ENCODE measurements at regions of chr6 and their contacts with region 1.

Region 1: GRCh38 chr6:162727309-162728182 is at the starts of genes PACRG and PRKN:
- DNase-seq: peak; percentile 99
- ATAC-seq: peak; percentile 99 to 100 (median 99)
- H3K4me3 ChIP-seq: peak within 1 kb of the TSS; percentile 60 to 98 (median 90)
- H3K27ac ChIP-seq: peak within 1 kb of the TSS; percentile 83 to 97 (median 95)
- H3K4me1 ChIP-seq: peaks cover 0 to 24% (median 16%) of the 10 kb centered on the region in 9 donors
- H3K27me3 ChIP-seq: no peaks in the 10 kb centered on the region
- CTCF ChIP-seq: peak in 1 of 9 donors; percentile 15
- total RNA-seq, gene PACRG: 7.1 to 34.6 (median 10.3) TPM
- total RNA-seq, gene PRKN: 21.4 to 27.7 (median 26.4) TPM

Region 2: DNA sequence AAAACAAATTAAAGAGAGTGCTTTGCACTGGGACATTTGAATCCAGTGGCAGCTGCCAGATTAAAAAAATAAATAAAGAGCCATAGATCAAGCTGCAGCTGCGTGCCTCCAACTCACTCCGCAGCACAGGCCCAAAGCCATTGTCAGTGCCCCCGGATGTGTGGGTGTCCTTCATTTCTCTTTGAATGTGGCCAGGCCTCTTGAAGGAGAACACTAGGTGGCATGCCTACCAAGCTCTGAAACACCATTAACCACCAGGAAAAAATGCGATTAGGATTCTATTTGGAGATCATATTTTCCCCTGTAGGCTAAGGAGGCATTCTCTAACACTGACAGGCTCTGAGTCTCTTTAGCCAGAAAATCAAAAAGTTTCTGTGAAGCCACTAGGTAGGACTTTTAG is 549.8 kb before region 1 on chr6:
- intact Hi-C with region 1: loop called in 6 of 10 experiments (anchors 5 to 10 kb)
- DNase-seq: peak in 1 of 2 donors; percentile 47
- ATAC-seq: peak; percentile 78 to 93 (median 84)
- H3K4me3 ChIP-seq: no peak overlapping the region
- H3K27ac ChIP-seq: peak overlapping the region in 9 of 10 donors; percentile 24 to 84 (median 64)
- H3K4me1 ChIP-seq: peaks cover 0 to 29% (median 15%) of the 10 kb centered on the region in 9 donors
- H3K27me3 ChIP-seq: no peaks in the 10 kb centered on the region
- CTCF ChIP-seq: peak; percentile 10 to 71 (median 37)

Region 3: DNA sequence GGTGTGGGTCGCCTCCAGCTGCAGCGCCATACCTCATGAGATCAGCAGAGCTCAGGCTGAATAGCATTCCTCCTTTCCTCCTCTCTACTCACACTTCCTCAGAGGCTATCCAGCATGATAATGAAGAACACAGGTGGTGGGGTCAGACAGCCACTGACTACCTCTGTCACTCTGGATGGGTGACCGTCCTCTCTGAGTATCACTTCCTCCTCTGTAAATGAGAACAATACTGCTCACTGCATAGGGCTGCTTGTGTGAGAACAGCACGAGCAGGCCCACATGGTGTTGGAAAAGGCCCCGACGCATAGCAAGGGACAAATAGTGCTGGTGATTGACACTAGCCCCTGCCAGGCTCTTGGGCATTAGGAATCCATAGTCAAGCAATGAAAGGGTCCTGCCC is 239.1 kb before region 1 on chr6:
- intact Hi-C with region 1: no loop called
- DNase-seq: no peak
- ATAC-seq: no peak
- H3K4me3 ChIP-seq: no peak overlapping the region
- H3K27ac ChIP-seq: no peak overlapping the region
- H3K4me1 ChIP-seq: peaks cover 0 to 20% (median 0%) of the 10 kb centered on the region in 9 donors
- H3K27me3 ChIP-seq: no peaks in the 10 kb centered on the region
- CTCF ChIP-seq: no peak

Region 4: GRCh38 chr6:162538643-162539064 is 188.9 kb before region 1 on chr6:
- intact Hi-C with region 1: loop called in 2 of 10 experiments (anchors 10 kb)
- DNase-seq: peak; percentile 78 to 81
- ATAC-seq: peak; percentile 76 to 95 (median 83)
- H3K4me3 ChIP-seq: peak overlapping the region in 1 of 10 donors; percentile 2
- H3K27ac ChIP-seq: peak overlapping the region in 8 of 10 donors; percentile 5 to 72 (median 52)
- H3K4me1 ChIP-seq: peaks cover 0 to 22% (median 12%) of the 10 kb centered on the region in 9 donors
- H3K27me3 ChIP-seq: no peaks in the 10 kb centered on the region
- CTCF ChIP-seq: no peak

Region 5: GRCh38 chr6:162615016-162615705 is 112.4 kb before region 1 on chr6:
- intact Hi-C with region 1: loop called in 3 of 10 experiments (anchors 10 kb)
- DNase-seq: no peak
- ATAC-seq: peak in 5 of 8 donors; percentile 43 to 91 (median 55)
- H3K4me3 ChIP-seq: no peak overlapping the region
- H3K27ac ChIP-seq: no peak overlapping the region
- H3K4me1 ChIP-seq: peaks cover 0 to 10% (median 5%) of the 10 kb centered on the region in 9 donors
- H3K27me3 ChIP-seq: no peaks in the 10 kb centered on the region
- CTCF ChIP-seq: no peak

Region 6: DNA sequence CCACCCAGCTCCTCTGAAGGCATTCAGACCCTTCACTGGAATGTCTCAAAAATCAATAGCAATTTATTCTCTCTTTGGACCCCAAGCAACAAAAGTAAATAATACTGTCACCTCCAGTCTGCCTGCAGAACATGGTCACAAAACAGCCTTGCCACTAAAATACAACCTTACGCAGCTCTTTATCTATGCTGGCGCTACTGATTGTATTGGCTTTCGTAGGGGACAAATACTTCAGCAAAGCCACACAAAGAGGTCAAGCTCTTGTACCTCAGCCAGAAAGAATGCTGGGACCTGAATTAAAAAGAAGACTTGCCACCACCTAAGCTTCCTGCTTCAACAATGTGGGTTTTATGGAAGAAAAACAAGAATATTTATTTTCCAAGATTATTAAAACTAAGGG is 57.2 kb before region 1 on chr6:
- intact Hi-C with region 1: loop called in 2 of 10 experiments (anchors 5 kb)
- DNase-seq: peak in 1 of 2 donors; percentile 36
- ATAC-seq: peak; percentile 71 to 94 (median 86)
- H3K4me3 ChIP-seq: peak overlapping the region in 1 of 10 donors; percentile 27
- H3K27ac ChIP-seq: peak overlapping the region in 9 of 10 donors; percentile 7 to 84 (median 76)
- H3K4me1 ChIP-seq: peaks cover 0 to 12% (median 0%) of the 10 kb centered on the region in 9 donors
- H3K27me3 ChIP-seq: no peaks in the 10 kb centered on the region
- CTCF ChIP-seq: no peak

Region 7: DNA sequence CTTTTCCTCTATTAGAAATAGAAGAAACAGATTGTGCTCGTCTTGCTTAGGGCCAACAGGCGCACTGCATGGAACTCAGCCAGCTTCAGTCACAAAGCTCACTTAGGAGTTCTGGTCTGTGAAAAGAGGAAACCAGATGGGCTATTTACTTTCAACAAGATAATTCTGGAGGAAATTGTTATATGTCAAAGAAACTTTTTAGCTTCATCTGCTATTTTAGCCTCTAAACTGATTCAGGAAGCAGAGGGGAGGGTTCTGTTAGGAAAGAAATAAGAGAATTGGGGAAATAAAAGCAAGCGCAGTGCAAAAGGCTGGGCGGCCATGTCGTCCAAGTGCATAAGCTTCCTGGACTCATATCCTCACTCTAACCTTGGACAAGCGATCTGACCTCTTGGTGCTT is 21.3 kb before region 1 on chr6:
- intact Hi-C with region 1: loop called in 1 of 10 experiments (anchors 2 kb)
- DNase-seq: peak; percentile 78 to 87
- ATAC-seq: peak; percentile 64 to 96 (median 90)
- H3K4me3 ChIP-seq: peak overlapping the region in 7 of 10 donors; percentile 7 to 37 (median 17)
- H3K27ac ChIP-seq: peak overlapping the region; percentile 30 to 86 (median 76)
- H3K4me1 ChIP-seq: peaks cover 0 to 35% (median 21%) of the 10 kb centered on the region in 9 donors
- H3K27me3 ChIP-seq: no peaks in the 10 kb centered on the region
- CTCF ChIP-seq: no peak

Region 8: DNA sequence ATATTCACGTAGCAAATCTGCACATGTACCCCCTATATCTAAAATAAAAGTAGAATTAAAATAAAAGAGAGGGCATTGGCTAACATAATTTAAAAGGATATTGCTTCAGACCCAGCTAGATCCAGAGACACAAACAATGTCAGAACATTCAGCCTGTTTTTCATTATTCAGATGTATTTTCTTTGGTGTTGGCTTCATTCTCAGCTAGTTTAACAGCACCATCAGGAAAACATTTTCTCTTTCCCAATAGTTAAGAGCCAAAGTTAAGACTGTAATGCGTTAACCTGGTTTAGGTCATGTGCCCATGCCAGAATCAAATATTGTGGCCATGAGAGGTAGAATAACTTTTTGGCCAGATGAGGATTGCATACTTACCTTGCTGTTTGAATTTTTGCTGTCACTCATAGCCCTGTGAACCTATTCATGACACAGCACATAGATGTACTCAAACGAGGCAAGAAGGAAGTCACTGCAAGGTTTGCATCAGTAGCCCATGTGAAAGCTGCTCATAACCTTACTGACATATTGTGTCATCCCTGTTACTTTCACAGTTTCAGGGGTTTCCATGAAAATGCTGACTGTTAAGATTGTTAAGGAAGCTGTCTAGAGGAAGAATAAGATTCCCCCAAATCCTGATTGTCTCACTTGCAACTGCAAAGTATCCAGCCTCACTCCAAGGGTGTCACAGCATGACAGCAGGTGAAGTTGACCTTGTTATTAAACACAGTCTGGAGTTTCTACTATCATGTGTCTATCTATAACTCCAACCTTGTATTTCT is 233.3 kb after region 1 on chr6:
- intact Hi-C with region 1: no loop called
- DNase-seq: no peak
- ATAC-seq: no peak
- H3K4me3 ChIP-seq: no peak overlapping the region
- H3K27ac ChIP-seq: no peak overlapping the region
- H3K4me1 ChIP-seq: peaks cover 0 to 21% (median 10%) of the 10 kb centered on the region in 9 donors
- H3K27me3 ChIP-seq: peaks cover 0 to 17% (median 0%) of the 10 kb centered on the region in 7 donors
- CTCF ChIP-seq: no peak